Activated naive CD4-positive, alpha-beta T cell treated with anti-CD3 and anti-CD28 coated beads for 36 hours (primary cell): ENCODE measurements at regions of chr5 and their contacts with region 1.

Region 1: GRCh38 chr5:82351754-82352145 is 73.6 kb upstream of the RPS23 start:
- DNase-seq: no peak
- H3K4me3 Mint-ChIP-seq: no peak overlapping the region
- H3K27ac Mint-ChIP-seq: no peak overlapping the region
- H3K4me1 Mint-ChIP-seq: peaks cover 23% of the 10 kb centered on the region
- H3K27me3 Mint-ChIP-seq: no peaks in the 10 kb centered on the region

Region 2: DNA sequence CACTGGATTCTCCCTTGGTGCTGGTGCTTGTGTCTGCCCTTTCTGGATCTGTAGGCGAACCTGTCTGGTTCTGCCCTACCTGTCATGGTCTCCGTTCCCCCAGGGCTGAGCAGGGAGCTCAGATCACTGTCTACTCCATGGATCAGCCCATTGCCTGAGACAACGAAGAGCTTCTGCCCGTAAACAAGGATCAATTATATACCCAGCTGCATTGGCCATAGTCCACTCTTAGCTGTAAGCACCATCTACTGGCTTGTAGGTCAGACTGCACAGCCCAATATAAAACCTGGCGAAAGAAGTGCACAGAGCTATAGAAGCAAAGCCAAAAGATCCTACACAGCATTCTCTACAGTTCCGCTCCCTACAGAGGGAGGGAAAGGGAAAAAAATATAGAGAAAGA is 107.9 kb after region 1 on chr5:
- CTCF ChIA-PET with region 1: interaction called, 7 read pairs
- intact Hi-C with region 1: loop called (anchors 1 kb)
- DNase-seq: no peak
- H3K4me3 Mint-ChIP-seq: no peak overlapping the region
- H3K27ac Mint-ChIP-seq: no peak overlapping the region
- H3K4me1 Mint-ChIP-seq: no peaks in the 10 kb centered on the region
- H3K27me3 Mint-ChIP-seq: peaks cover 21% of the 10 kb centered on the region

Region 3: GRCh38 chr5:82641331-82642003 is 289.7 kb after region 1 on chr5:
- CTCF ChIA-PET with region 1: interaction called, 8 read pairs
- intact Hi-C with region 1: loop called (anchors 1 kb)
- DNase-seq: peak; percentile 34
- H3K4me3 Mint-ChIP-seq: no peak overlapping the region
- H3K27ac Mint-ChIP-seq: no peak overlapping the region
- H3K4me1 Mint-ChIP-seq: no peaks in the 10 kb centered on the region
- H3K27me3 Mint-ChIP-seq: no peaks in the 10 kb centered on the region

Region 4: DNA sequence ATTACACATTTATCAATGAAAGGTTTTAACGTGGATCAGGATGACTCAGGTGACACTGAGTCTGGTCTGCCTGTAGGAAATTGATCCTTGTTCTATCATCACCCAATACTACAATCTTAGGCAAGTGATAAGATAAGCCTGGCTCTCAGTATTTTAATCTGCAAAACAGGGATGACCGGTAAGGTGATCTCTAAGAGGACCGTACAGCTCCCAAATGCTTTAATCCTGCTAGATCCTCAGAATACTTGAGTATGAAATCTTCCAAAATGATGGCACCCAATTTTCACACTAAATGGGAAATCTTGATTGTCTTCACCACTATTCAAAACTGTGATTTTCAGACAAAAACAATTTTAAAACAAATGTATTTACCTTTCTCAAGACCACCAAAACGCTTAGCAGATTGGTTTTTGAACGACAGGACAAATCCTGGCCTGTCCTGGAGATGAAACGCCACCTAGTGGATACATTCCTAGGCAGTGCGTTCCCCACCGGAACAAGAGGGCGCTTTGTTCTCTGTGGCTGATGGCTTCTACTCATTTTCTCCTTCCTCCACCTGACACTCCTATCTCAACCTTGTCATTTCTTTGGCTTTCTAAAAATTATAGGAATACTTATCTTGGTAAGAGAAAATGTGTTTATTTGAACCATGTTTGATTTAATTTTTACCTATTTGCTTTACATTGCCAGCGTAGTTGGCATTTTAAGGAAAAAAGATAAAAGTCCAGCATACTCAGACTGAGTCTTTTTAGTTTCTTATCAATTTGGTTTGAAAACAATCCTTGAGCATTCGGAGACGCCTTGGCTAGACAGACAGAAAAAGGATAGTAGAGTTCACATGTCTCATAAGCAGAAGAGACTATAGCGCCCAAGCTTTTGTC is 1078.6 kb after region 1 on chr5:
- CTCF ChIA-PET with region 1: no interaction called
- intact Hi-C with region 1: loop called (anchors 1 kb)
- DNase-seq: peak; percentile 76
- H3K4me3 Mint-ChIP-seq: no peak overlapping the region
- H3K27ac Mint-ChIP-seq: no peak overlapping the region
- H3K4me1 Mint-ChIP-seq: no peaks in the 10 kb centered on the region
- H3K27me3 Mint-ChIP-seq: no peaks in the 10 kb centered on the region

Region 5: GRCh38 chr5:83564069-83564749 is 1212.5 kb after region 1 on chr5:
- CTCF ChIA-PET with region 1: no interaction called
- intact Hi-C with region 1: loop called (anchors 1 kb)
- DNase-seq: no peak
- H3K4me3 Mint-ChIP-seq: no peak overlapping the region
- H3K27ac Mint-ChIP-seq: no peak overlapping the region
- H3K4me1 Mint-ChIP-seq: no peaks in the 10 kb centered on the region
- H3K27me3 Mint-ChIP-seq: peaks cover 25% of the 10 kb centered on the region